ENCODE measurements at regions of chr11 and their contacts with region 1.

Region 1: DNA sequence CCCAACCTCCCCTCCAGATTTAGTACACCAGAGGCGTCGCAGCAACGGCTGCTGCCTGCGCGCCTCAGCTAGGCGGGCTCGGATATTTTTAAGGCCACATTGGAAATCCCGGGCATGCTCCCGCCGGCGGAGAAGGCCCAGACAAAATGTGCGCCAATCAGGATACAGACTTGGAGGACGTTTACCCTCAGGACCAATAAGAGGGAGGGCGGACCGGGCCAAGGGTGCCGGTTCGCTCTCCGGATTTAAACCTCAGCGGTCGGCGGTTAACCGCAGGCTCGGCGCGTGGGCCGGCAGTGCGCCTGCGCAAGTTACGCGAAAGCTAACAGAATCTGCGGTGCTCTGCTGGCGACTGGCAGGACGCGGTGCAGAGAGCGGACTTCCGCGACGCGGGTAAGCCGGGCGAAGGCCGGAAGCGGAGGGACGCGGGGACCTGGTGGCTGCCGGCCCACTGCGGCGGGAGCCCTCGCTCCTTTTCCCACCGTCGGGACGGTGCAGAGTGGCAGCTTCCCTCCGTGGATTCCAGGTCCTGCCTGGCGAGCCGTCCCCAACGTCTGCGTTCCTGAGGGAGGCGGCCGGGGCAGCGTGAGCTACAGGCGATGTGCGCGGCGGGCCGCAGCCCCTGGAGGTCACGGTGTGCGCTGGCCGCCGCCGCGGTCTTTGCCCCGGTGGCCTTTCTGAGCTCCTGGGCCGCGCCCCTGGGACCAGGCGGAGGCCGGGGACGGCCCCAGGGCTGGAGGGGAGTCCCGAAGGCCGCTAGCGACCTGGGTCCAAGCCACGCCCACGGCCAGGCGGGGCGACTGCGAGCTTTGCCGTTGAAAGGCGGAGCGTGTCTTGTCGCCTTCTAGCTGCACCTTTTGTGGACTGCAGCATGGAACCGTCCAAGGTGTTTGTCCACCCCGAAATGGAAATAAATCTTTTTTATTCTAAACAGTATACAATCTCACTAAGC is at the start of gene HYLS1:
- DNase-seq: peak; percentile 89
- ATAC-seq: peak; percentile 96
- H3K4me3 ChIP-seq: peak within 1 kb of the TSS; percentile 66 to 91
- H3K27ac ChIP-seq: peak within 1 kb of the TSS; percentile 96
- H3K4me1 ChIP-seq: peaks cover 35% of the 10 kb centered on the region
- H3K27me3 ChIP-seq: no peaks in the 10 kb centered on the region
- CTCF ChIP-seq: peak; percentile 59
- total RNA-seq, gene HYLS1: 32.2 TPM

Region 2: GRCh38 chr11:125662689-125663088 is 225.0 kb before region 1 on chr11:
- CTCF ChIA-PET with region 1: no interaction called
- POLR2A ChIA-PET with region 1: no interaction called
- in situ Hi-C with region 1: no loop called
- intact Hi-C with region 1: no loop called
- DNase-seq: no peak
- ATAC-seq: no peak
- H3K4me3 ChIP-seq: no peak overlapping the region
- H3K27ac ChIP-seq: no peak overlapping the region
- H3K4me1 ChIP-seq: no peaks in the 10 kb centered on the region
- H3K27me3 ChIP-seq: no peaks in the 10 kb centered on the region
- CTCF ChIP-seq: no peak

Region 3: GRCh38 chr11:125797641-125798040 is 90.0 kb before region 1 on chr11:
- CTCF ChIA-PET with region 1: no interaction called
- POLR2A ChIA-PET with region 1: interaction called, 12 read pairs
- in situ Hi-C with region 1: no loop called
- intact Hi-C with region 1: no loop called
- DNase-seq: no peak
- ATAC-seq: no peak
- H3K4me3 ChIP-seq: no peak overlapping the region
- H3K27ac ChIP-seq: no peak overlapping the region
- H3K4me1 ChIP-seq: no peaks in the 10 kb centered on the region
- H3K27me3 ChIP-seq: no peaks in the 10 kb centered on the region
- CTCF ChIP-seq: no peak

Region 4: GRCh38 chr11:126146433-126147192 is 259.0 kb after region 1 on chr11:
- CTCF ChIA-PET with region 1: no interaction called
- POLR2A ChIA-PET with region 1: interaction called, 19 read pairs
- in situ Hi-C with region 1: no loop called
- intact Hi-C with region 1: no loop called
- DNase-seq: no peak
- ATAC-seq: peak; percentile 51
- H3K4me3 ChIP-seq: no peak overlapping the region
- H3K27ac ChIP-seq: no peak overlapping the region
- H3K4me1 ChIP-seq: peaks cover 10% of the 10 kb centered on the region
- H3K27me3 ChIP-seq: no peaks in the 10 kb centered on the region; the same call in 1 of the 2 replicates
- CTCF ChIP-seq: no peak

Region 5: DNA sequence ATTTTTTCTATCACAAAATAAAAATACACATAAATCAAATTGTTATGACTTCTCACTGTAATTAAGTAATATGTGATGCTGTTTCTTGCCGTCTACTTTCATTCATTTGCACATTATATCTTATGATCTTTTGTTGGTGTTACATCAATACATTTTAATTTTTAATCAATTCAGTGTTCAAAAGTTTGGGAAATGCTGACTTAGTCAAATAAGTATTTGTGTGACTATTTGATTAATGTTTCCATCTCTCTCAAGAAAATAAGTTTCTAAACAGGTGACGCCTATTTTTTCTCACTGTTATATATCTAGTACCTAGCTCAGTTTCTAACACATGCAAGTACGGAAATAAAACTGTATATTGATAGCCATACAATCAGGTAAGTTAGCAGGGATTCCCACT is 1442.4 kb after region 1 on chr11:
- CTCF ChIA-PET with region 1: no interaction called
- POLR2A ChIA-PET with region 1: interaction called, 10 read pairs
- in situ Hi-C with region 1: no loop called
- intact Hi-C with region 1: no loop called
- DNase-seq: no peak
- ATAC-seq: no peak
- H3K4me3 ChIP-seq: no peak overlapping the region
- H3K27ac ChIP-seq: no peak overlapping the region
- H3K4me1 ChIP-seq: no peaks in the 10 kb centered on the region
- H3K27me3 ChIP-seq: no peaks in the 10 kb centered on the region
- CTCF ChIP-seq: no peak

Measured in Panc1 (cell line).